ENCODE measurements at regions of chr9 and their contacts with region 1.

Region 1: DNA sequence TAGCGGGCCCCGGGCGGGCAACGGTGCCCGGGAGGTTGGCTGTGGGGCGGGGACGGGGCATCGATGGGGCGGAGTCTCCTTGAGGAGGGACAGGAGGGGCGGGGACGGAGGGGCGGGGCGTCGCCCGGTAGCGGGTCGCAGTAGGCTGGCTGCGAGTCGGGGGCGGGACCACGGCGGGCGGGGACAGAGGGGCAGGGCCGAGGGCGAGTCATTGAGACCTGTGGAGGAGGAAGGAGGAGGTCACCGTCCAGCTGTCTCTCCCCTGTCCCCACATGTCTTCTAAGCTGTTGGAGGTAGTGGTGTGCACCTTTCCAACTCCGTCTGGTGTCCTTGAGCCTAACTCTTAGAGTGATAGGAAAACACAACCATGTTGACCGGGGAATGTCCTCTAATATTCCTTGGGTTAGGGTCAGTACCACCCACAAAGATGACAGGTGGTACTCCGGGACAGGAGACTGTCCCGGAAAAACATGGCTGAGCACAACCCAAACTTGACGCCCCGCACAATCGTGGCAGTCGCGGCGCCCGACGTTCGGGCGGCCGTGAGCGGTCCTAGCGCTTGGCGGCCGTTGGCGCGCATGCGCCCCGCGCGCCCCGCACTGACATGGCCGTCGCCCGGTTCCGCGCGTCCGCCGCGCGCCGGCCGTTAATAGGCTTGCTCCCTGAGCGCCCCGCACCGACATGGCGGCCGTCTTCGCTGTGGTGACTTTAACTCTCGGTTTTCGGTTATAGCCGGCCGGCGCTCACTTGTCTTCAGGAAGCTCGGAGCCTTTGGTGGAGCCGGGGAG is at the starts of genes CRAT and PTPA:
- DNase-seq: peak; percentile 96 to 100 (median 99)
- ATAC-seq: peak; percentile 92
- H3K4me3 ChIP-seq: peak within 1 kb of the TSS; percentile 100
- H3K27ac ChIP-seq: peak within 1 kb of the TSS; percentile 100
- H3K4me1 ChIP-seq: peaks cover 23 to 53% of the 10 kb centered on the region in 2 experiments
- H3K27me3 ChIP-seq: no peaks in the 10 kb centered on the region
- CTCF ChIP-seq: no peak
- EP300 ChIP-seq: peak; percentile 22
- POLR2A ChIP-seq: peak; percentile 98
- RAD21 ChIP-seq: no peak
- polyA plus RNA-seq, gene CRAT: 0.20 to 0.67 TPM
- polyA plus RNA-seq, gene PTPA: 1.7 to 3.4 TPM

Region 2: DNA sequence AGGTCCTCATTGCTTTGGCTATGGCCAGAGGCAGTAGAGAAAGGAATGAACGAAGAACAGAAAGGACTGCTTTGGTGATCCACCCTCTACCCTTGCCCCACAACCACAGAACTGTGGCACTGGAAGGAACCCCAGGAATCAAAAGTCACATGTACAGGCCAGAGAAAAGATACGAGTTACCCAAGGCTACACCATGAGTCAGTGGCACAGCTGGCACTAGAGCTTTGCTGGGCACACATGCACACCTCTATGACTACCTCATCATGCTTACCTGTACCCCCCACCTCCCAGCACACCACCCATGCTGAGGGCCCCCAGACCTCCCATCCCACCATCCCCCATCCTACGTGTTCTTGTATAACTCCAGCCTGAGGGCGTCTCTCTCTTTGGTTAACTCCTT is 848.2 kb before region 1 on chr9:
- CTCF ChIA-PET with region 1: no interaction called
- POLR2A ChIA-PET with region 1: no interaction called
- in situ Hi-C with region 1: no loop called
- intact Hi-C with region 1: no loop called
- DNase-seq: no peak
- ATAC-seq: no peak
- H3K4me3 ChIP-seq: no peak overlapping the region
- H3K27ac ChIP-seq: no peak overlapping the region
- H3K4me1 ChIP-seq: peaks cover 0 to 17% of the 10 kb centered on the region in 2 experiments; a peak in 2 of 5 replicates
- H3K27me3 ChIP-seq: no peaks in the 10 kb centered on the region
- CTCF ChIP-seq: no peak
- EP300 ChIP-seq: no peak
- POLR2A ChIP-seq: no peak
- RAD21 ChIP-seq: no peak

Region 3: GRCh38 chr9:128587453-128587852 is 523.5 kb before region 1 on chr9:
- CTCF ChIA-PET with region 1: no interaction called
- POLR2A ChIA-PET with region 1: no interaction called
- in situ Hi-C with region 1: no loop called
- intact Hi-C with region 1: no loop called
- DNase-seq: no peak
- ATAC-seq: peak; percentile 33; the same call in 2 of the 3 replicates
- H3K4me3 ChIP-seq: no peak overlapping the region
- H3K27ac ChIP-seq: no peak overlapping the region
- H3K4me1 ChIP-seq: peaks cover 0 to 4% of the 10 kb centered on the region in 2 experiments; a peak in 1 of 5 replicates
- H3K27me3 ChIP-seq: no peaks in the 10 kb centered on the region
- CTCF ChIP-seq: no peak
- EP300 ChIP-seq: no peak
- POLR2A ChIP-seq: no peak
- RAD21 ChIP-seq: no peak

Region 4: DNA sequence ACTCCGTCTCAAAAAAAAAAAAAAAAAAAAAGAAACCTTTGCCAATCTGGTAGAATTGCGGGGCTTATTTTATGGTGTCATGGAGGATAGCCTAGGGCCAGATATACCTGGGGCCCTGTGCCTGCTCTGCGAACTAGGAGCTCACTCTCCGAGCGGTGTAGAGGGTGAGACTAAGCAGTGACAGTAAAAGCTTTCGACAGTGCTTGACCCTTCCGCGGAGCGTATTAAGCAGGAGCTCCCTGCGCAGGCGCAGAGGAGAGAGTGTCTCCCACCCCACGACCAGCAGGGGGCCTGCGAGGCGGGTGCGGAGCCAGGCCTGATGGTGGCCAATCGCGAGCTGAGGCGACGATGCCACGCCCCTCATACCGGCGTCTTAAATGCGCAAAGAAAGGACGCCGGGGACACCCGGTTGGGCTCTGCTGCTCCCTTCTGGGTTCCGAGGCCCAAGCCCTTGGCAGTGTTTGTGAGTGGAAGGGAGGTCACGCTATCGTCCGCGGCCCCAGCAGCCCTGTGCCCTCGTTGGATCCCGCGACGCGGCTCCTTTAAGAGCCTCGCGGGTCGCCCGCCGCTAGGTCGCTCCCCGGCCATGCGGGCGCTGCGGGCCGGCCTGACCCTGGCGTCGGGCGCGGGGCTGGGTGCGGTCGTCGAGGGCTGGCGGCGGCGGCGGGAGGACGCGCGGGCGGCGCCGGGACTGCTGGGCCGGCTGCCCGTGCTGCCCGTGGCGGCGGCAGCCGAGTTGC is 292.7 kb before region 1 on chr9 and contains the start of gene ENDOG:
- CTCF ChIA-PET with region 1: no interaction called
- POLR2A ChIA-PET with region 1: no interaction called
- in situ Hi-C with region 1: no loop called
- intact Hi-C with region 1: no loop called
- DNase-seq: peak; percentile 97 to 100 (median 98)
- ATAC-seq: peak; percentile 87
- H3K4me3 ChIP-seq: peak within 1 kb of the TSS; percentile 70
- H3K27ac ChIP-seq: peak within 1 kb of the TSS; percentile 84
- H3K4me1 ChIP-seq: peaks cover 4 to 51% of the 10 kb centered on the region in 2 experiments; a peak in 3 of 5 replicates
- H3K27me3 ChIP-seq: no peaks in the 10 kb centered on the region
- CTCF ChIP-seq: peak; percentile 89 to 98 (median 97)
- EP300 ChIP-seq: no peak
- POLR2A ChIP-seq: peak; percentile 94
- RAD21 ChIP-seq: peak; percentile 38 to 47
- polyA plus RNA-seq, gene ENDOG: 1.2 to 3.8 TPM

Region 5: DNA sequence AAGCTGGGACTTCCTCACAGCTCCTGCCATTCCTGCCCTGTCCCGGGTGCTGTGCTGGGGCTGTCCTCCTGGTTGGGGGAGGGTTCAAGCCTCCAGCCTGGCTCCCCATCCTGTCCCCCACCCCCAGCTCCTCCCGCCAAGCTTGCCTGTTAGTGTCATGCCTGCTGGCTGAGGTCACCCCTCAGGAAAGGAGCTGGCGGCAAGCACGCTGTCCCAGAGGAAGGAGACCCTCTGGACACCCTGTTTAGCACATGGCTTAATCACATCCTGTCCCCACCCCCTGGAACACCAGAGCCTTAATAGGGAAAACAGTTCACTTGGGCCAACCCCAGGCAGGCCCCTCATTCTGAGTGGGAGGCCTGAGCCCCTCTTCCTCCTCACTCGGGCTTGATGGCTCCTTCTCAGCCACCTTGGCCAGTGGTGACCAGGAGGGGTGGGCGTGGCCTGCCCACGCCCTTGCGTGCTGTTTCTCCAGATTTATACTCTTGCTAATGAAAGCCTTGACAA is 199.4 kb before region 1 on chr9:
- CTCF ChIA-PET with region 1: no interaction called
- POLR2A ChIA-PET with region 1: no interaction called
- in situ Hi-C with region 1: no loop called
- intact Hi-C with region 1: no loop called
- DNase-seq: peak in 2 of 4 experiments; percentile 18 to 45
- ATAC-seq: peak; percentile 47
- H3K4me3 ChIP-seq: no peak overlapping the region
- H3K27ac ChIP-seq: no peak overlapping the region
- H3K4me1 ChIP-seq: peaks cover 17 to 49% of the 10 kb centered on the region in 2 experiments
- H3K27me3 ChIP-seq: no peaks in the 10 kb centered on the region; a peak in 1 of 5 replicates
- CTCF ChIP-seq: no peak
- EP300 ChIP-seq: no peak
- POLR2A ChIP-seq: no peak
- RAD21 ChIP-seq: no peak

Region 6: DNA sequence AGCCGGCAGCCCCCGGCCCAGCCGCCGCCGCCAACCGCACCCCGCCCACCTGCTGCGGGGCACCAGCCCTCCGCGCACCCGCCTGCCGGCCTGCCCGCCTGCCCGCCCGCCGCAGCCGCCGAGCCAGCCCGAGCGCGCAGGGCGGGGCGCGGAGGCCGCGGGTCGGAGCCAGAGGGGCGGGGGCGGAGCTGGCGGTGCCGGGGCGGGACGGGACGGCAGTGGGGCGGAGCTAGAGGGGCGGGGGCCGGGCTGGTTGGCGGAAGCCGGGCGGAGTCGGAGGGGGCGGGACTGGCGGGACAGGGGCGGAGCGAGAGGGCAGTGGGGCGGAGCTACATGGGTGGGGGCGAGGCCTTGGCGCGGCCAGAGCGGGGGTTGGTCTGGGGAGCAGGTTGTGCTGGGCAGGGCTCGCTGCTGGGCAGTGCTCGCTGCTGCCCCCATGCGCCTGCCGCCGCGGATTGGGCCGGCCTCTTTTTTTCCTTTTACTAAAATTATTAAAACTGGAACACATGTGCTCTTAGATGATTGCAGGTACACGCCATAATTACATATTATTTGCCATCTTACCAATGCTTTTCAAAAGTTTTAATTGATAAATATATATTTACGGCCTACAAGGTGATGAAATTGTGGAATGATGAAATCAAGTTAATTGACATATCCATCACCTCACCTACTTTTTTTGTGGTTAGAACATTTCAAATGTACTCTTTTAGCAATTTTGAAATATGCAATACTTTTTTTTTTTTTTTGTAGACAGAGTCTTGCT is 82.6 kb before region 1 on chr9 and contains the start of gene SH3GLB2:
- CTCF ChIA-PET with region 1: no interaction called
- POLR2A ChIA-PET with region 1: no interaction called
- in situ Hi-C with region 1: no loop called
- intact Hi-C with region 1: loop called (anchors 5 kb)
- DNase-seq: peak; percentile 92 to 97 (median 94)
- ATAC-seq: peak; percentile 89
- H3K4me3 ChIP-seq: peak within 1 kb of the TSS; percentile 56
- H3K27ac ChIP-seq: peak within 1 kb of the TSS; percentile 72
- H3K4me1 ChIP-seq: peaks cover 43 to 70% of the 10 kb centered on the region in 2 experiments
- H3K27me3 ChIP-seq: no peaks in the 10 kb centered on the region
- CTCF ChIP-seq: peak; percentile 77 to 92 (median 88)
- EP300 ChIP-seq: no peak
- POLR2A ChIP-seq: no peak
- RAD21 ChIP-seq: peak; percentile 27 to 57; a peak in 3 of 4 replicates
- polyA plus RNA-seq, gene SH3GLB2: 0.20 to 0.98 TPM

Region 7: GRCh38 chr9:129097671-129098295 is 13.2 kb before region 1 on chr9:
- CTCF ChIA-PET with region 1: no interaction called
- POLR2A ChIA-PET with region 1: interaction called, 11 read pairs
- in situ Hi-C with region 1: no loop called
- intact Hi-C with region 1: no loop called
- DNase-seq: no peak
- ATAC-seq: no peak
- H3K4me3 ChIP-seq: no peak overlapping the region
- H3K27ac ChIP-seq: no peak overlapping the region
- H3K4me1 ChIP-seq: peaks cover 11 to 42% of the 10 kb centered on the region in 2 experiments
- H3K27me3 ChIP-seq: no peaks in the 10 kb centered on the region
- CTCF ChIP-seq: no peak
- EP300 ChIP-seq: no peak
- POLR2A ChIP-seq: no peak
- RAD21 ChIP-seq: no peak

Region 8: DNA sequence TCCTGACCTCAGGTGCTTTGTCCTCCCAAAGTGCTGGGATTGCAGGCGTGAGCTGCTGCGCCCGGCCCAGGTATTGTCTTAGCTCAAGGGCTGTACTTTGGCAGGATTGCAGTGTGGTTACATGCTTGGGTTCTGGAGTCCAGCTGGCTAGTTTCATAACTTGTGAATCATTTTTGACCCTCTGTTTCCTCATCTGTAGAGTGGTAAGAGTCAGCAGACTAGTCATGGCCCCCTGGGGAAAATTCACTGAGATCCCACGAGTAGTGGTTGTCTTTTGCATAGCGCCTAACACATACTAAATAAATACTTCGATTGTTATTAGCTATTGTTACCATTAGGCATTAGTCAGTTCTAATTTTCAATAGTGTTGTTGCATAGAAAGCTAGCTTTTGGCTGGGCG is 14.5 kb after region 1 on chr9:
- CTCF ChIA-PET with region 1: no interaction called
- POLR2A ChIA-PET with region 1: interaction called, 35 read pairs
- in situ Hi-C with region 1: no loop called
- intact Hi-C with region 1: no loop called
- DNase-seq: no peak
- ATAC-seq: no peak
- H3K4me3 ChIP-seq: no peak overlapping the region
- H3K27ac ChIP-seq: no peak overlapping the region
- H3K4me1 ChIP-seq: no peaks in the 10 kb centered on the region; a peak in 2 of 5 replicates
- H3K27me3 ChIP-seq: no peaks in the 10 kb centered on the region
- CTCF ChIP-seq: no peak
- EP300 ChIP-seq: no peak
- POLR2A ChIP-seq: no peak
- RAD21 ChIP-seq: no peak

Measured in K562 (cell line).